ENCODE measurements at regions of chr1 and their contacts with region 1.

Region 1: DNA sequence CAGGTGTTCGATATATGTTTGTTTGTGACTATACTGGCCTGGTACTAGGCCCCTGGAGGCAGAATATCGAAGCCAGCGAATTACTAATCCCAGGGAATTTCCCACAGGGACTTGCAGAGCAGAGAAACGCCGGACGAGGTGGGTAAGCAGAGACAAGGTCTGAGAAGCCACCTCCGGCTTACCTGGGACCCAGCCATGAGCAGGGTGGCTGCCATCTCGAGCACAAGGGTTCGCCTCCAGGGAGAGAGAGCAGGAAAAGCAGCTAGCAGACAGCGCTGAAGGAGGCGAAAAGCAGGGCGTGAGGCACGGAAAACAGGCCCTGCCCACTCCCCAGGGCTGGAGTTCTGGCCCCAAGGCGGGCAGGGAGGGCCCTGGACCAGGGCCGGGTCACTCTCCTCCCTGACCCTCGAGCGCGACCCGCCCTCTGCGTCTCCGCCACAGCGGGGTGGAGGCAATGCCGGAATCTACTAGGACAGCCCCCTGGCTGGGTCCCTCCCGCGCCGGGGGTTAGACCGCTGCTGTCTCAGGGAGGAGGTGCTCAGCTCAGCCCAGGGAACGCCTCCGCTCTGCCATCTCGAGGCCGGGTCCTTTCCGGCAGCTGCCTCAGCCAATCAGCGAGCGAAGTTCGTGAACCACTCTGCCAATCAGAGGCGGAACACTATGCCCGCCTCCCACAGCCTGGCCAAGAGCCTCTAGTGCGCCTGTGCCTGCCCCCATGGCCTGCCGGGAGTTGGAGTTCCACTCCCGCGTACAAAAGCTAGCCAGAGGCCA is 1.7 kb downstream of the ZNF436 start:
- DNase-seq: peak; percentile 95 to 99
- H3K4me3 ChIP-seq: peak overlapping the region; percentile 96
- H3K27ac ChIP-seq: peak overlapping the region; percentile 84
- H3K4me1 ChIP-seq: peaks cover 37% of the 10 kb centered on the region
- H3K27me3 ChIP-seq: no peaks in the 10 kb centered on the region
- CTCF ChIP-seq: 0 out of 2 replicates have a peak, but pooled peaks have one; percentile 22

Region 2: DNA sequence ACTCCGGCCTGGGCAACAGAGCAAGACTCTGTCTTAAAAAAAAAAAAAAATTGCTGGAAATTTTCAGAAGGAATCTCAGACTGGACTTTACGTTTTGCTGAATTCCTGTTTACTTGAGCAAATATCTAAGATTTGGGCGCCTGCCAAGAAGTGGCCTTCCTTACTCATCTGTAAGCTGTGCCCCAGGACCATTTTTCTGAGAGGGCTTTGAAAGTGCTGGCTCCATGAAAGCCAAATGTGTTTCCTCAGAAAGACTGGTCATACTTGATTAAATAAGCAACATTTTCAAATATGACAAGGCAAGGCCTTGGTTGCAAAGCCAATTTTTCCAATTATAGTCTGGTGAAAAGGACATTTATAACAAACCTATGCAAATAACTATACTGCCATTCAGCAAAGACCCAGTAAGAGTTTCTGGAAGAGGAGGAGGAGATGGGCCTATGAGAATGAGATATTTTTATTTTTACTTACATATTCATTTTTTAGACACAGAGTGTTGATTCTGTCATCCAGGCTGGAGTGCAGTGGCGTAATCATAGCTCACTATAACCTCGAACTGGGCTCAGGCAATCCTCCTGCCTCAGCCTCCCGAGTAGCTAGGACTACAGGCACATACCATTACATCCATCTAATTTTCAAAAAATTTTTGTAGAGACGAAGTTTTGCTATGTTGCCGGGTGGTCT is 94.4 kb before region 1 on chr1:
- CTCF ChIA-PET with region 1: no interaction called
- POLR2A ChIA-PET with region 1: interaction called, 14 read pairs
- intact Hi-C with region 1: no loop called
- DNase-seq: peak; percentile 46 to 57
- H3K4me3 ChIP-seq: no peak overlapping the region
- H3K27ac ChIP-seq: no peak overlapping the region
- H3K4me1 ChIP-seq: peaks cover 24% of the 10 kb centered on the region
- H3K27me3 ChIP-seq: no peaks in the 10 kb centered on the region
- CTCF ChIP-seq: no peak

Region 3: DNA sequence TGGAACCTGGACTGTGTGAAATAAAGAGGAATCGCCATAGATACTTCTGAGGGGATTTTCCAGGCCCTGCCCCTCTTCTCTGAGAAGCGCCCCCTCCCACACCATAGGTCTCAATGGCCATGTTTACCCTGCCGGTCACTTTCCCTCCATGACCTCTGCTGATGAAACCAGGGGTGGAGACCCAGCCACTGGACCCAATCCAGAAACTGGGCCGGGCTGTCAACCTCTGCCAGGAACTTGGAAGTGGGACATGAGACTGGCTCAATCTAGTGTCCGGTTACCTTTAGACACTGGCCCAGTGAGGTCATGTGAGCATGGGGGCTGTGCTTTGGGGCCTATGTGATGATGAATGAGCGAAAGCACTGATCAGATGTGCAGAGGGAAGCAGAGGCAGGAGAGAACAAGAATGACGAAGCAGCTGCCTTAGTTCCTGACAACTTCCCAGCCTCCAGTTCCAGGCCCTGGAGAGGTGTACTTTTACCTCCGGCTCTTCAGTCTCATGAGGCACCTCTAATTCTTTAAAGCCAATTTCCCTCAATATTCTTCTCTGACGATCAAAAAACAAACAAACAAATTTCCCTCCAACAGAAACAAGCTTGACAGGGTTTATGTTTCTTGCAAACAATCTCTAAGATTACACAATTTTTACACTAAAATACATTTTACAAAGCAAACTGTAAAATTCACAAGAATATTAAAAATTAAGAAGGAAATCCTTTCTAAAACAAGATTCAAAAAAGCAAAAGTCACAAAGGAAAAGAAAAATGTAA is 111.1 kb after region 1 on chr1:
- CTCF ChIA-PET with region 1: no interaction called
- POLR2A ChIA-PET with region 1: interaction called, 3 read pairs
- intact Hi-C with region 1: loop called (anchors 2 kb)
- DNase-seq: peak in 1 of 2 experiments; percentile 80
- H3K4me3 ChIP-seq: no peak overlapping the region
- H3K27ac ChIP-seq: peak overlapping the region; percentile 64
- H3K4me1 ChIP-seq: peaks cover 55% of the 10 kb centered on the region
- H3K27me3 ChIP-seq: no peaks in the 10 kb centered on the region
- CTCF ChIP-seq: no peak

Measured in PC-9 (cell line).